ENCODE measurements at regions of chr1 and their contacts with region 1.

Region 1: DNA sequence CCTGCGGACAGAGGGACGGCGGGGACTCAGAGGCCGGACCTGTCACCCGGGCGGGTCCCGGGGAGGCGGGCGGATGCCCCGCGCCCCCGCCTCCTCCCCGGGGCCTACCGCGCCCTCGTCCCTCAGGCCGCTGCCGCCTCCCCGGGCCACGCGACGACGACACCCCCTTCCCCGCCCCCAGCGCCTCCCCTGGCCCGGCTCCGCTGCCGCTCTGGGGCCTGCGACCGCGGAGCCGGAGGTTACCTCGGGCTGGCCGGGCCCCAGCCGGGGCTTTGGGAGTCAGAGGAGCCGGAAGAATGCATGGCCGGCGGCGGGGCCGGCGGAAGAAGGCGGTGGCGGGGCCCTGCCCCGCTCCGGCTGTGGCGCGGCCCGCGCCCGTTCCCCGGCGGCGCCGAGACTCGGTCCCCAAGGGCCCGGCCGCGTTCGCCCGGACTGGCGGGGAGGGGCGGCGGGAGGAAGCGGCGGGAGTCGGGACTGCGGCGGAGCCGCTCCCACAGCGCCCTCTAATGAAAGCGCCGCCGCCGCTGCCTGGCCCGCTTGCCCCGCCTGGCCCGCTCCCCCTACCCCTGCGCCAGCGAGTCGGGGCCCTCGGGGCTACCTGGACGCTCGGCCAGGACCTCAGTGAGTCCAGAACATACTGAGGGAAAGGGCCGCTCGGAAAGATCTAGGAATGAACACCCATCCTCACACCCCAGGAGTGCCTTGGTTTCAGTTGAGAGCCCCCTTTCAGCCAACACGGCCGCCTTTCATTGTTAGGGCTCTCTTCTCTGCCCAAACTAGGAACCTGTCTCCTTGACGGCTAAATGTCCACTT is at the start of gene LPGAT1:
- DNase-seq: peak; percentile 83 to 95
- ATAC-seq: peak; percentile 94
- H3K4me3 ChIP-seq: peak within 1 kb of the TSS; percentile 94 to 100
- H3K27ac ChIP-seq: peak within 1 kb of the TSS; percentile 49 to 90
- H3K4me1 ChIP-seq: peaks cover 2 to 5% of the 10 kb centered on the region in 2 donors
- H3K27me3 ChIP-seq: no peaks in the 10 kb centered on the region
- total RNA-seq, gene LPGAT1: 42.2 to 50.0 TPM

Region 2: DNA sequence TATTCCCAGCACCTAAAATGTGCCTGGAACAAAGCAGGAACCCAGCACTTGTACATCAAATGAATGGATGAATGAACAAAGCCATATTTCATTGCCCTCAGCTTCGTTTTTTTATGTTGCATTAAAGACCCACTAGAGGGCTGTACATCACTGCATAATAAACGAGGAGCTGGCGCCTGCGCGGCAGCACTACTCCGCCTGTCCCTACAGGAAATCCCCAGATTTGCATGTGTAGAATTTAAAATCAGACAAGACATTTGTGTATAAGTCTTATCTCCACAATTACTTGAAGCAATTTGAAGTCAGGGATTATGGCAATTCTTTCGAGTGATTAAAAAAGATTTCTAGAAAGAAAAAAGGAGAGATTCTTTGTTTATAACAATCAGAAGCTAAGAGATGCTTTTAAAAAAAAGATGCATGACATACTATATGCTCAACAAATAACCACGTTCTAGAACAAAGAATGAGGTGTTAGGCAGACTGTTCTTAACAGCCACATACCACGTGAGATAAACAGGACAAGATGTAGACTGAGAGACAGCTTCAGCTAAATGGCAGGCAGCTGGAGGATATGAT is 149.7 kb before region 1 on chr1:
- intact Hi-C with region 1: loop called in 1 of 2 experiments (anchors 10 kb)
- DNase-seq: peak; percentile 82 to 84
- ATAC-seq: peak; percentile 91
- H3K4me3 ChIP-seq: no peak overlapping the region
- H3K27ac ChIP-seq: no peak overlapping the region
- H3K4me1 ChIP-seq: no peaks in the 10 kb centered on the region
- H3K27me3 ChIP-seq: no peaks in the 10 kb centered on the region

Region 3: DNA sequence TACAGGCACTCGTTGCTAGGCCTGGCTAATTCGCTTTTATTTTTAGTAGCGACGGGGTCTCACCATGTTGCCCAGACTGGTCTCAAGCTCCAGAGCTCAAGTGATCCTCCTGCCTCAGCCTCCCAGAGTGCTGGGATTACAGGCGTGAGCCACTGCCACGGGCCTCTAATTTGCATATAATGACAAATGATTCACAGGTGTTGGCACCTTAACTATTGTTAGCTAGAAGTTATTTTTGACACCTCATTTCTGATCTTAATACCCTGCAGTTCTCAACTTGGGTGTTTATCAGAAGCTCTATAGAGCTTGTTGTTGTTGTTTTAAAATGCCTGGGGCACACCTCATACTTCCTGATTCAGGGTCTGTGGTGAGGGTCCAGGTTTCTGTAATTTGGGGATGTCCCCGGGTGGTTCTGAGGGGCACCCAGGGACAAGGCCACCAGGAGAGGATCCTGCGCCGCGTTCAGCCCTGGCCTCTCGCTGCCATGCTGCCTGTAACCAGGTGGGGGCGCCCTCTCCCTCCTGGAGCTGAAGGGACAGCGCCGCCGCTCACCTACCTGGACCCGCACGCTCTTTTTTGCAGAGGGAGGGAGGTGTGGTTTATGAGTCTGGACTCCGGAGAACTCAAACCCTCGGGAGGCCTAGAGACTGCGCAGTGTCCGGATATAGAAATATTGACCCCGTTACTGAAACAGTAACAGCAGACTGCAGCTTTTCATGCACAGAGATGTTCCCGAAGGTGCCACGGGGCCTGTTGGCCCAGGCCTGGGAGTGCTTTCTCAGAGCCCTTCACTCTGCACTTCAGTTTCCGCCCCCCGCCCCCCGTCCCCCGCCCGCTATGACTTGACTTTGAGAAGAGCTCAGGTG is 132.1 kb before region 1 on chr1:
- intact Hi-C with region 1: loop called in 1 of 2 experiments (anchors 10 kb)
- DNase-seq: peak; percentile 81 to 90
- ATAC-seq: peak; percentile 88
- H3K4me3 ChIP-seq: no peak overlapping the region
- H3K27ac ChIP-seq: no peak overlapping the region
- H3K4me1 ChIP-seq: no peaks in the 10 kb centered on the region
- H3K27me3 ChIP-seq: no peaks in the 10 kb centered on the region

Region 4: DNA sequence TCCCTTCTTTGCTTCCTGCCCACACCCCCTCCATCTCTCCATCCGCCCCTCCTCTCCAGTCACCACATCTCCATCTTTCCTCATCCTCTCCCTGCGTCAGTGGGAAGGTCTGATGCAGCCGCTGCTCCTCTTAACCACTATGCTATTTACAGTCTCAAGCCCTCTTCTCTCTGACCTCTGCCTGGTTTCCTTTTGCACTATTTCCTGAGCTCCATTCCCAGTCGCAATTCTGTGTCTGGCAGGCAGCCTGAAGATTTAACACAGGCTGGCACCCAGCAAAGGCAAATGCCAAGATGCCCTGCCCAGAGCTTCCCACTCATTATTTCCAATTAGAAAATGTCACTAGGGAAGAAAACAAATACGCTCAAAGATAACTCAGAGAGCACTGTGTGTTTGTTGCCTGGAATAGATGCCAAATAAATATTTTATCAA is 89.6 kb after region 1 on chr1:
- intact Hi-C with region 1: loop called in 1 of 2 experiments (anchors 5 kb)
- DNase-seq: peak; percentile 73 to 79
- ATAC-seq: peak; percentile 77
- H3K4me3 ChIP-seq: no peak overlapping the region
- H3K27ac ChIP-seq: no peak overlapping the region
- H3K4me1 ChIP-seq: no peaks in the 10 kb centered on the region
- H3K27me3 ChIP-seq: no peaks in the 10 kb centered on the region